K562 (cell line): ENCODE measurements at regions of chr12 and their contacts with region 1.

Region 1: DNA sequence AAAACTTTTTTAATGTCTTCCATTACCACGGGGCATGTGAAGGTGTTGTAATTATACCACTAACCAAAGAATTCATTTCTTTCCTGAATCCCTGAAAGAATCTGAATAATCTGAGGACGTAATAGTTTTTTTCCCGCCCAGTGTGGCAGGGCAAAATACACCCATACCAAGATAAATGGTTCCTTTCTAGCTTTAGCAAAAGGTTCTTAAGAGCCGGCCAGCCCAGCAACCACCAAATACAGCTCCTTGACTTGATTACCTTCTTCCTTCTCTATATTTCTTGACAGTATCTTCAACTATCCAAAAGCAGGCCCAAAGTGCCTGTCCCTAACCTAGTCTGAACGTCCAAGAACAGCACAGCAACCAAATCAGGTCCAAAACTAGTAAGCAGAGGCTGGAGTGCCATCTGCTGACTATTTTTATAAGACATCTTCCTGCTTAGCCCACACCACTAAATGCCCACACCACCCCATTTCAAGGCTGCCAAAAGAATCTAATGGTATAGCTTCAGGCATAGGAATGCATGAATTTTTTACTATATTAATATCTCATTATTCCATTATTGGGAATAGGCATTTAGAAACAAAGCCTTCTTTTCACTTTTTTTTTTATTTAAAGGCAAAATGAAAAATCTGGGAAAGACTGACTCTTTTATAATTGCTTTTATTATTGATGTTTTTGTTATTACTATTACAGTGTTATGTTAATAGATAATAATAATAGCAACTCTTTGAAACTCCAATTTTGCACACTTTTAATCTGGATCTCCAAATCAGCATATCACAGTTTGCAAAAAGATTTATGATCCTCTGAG is 524.4 kb downstream of the MED13L start:
- DNase-seq: peak; percentile 26 to 48 (median 32)
- ATAC-seq: peak; percentile 81
- H3K4me3 ChIP-seq: no peak overlapping the region
- H3K27ac ChIP-seq: no peak overlapping the region
- H3K4me1 ChIP-seq: no peaks in the 10 kb centered on the region
- H3K27me3 ChIP-seq: peaks cover 0 to 2% of the 10 kb centered on the region in 2 experiments; a peak in 3 of 5 replicates
- CTCF ChIP-seq: peak; percentile 45 to 65 (median 57)
- EP300 ChIP-seq: no peak
- POLR2A ChIP-seq: no peak
- RAD21 ChIP-seq: peak; percentile 72 to 79

Region 2: DNA sequence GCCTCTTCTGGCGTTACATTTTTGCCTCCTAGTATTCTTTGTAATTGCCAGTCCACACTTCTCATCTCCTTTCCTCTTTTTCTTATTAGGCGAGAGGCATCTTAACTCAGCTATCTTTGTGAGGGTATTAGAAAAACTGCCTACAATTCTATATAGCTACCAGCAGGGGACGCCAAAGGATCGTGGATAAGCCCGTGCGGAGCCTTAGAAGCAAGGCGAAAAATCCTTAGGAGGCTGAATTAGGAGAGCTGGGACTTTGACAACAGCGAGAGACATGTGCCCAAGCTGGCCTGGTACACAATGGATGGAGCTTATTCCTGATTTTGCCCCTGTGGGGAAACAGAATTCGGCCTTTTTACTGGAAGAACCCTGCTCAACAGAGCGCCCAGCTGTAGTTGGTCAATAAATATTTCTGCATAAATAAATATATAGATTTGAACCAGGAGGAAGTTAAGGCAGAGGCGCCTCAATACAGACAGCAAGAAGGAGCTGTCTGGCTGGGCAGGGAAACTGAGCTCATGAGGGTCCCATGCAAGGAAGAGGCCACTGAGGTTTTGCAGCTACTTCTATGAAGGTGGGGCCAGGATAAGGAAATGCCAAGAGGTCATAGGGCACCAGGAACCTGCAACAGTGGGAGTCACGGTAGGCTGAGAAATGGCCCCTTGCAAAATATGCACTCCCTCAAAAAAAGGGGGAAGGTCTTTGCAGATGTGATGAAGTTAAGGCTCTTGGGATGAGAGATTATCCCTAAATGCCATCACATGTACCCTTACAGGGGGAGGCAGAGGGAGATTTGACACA is 1772.4 kb before region 1 on chr12:
- CTCF ChIA-PET with region 1: interaction called, 4 read pairs
- POLR2A ChIA-PET with region 1: no interaction called
- in situ Hi-C with region 1: loop called (anchors 25 kb)
- intact Hi-C with region 1: loop called (anchors 10 kb)
- DNase-seq: peak; percentile 62 to 79 (median 66)
- ATAC-seq: peak; percentile 89
- H3K4me3 ChIP-seq: no peak overlapping the region
- H3K27ac ChIP-seq: no peak overlapping the region
- H3K4me1 ChIP-seq: no peaks in the 10 kb centered on the region
- H3K27me3 ChIP-seq: no peaks in the 10 kb centered on the region; a peak in 1 of 5 replicates
- CTCF ChIP-seq: peak; percentile 87 to 98 (median 94)
- EP300 ChIP-seq: no peak
- POLR2A ChIP-seq: no peak
- RAD21 ChIP-seq: peak; percentile 85 to 94

Region 3: DNA sequence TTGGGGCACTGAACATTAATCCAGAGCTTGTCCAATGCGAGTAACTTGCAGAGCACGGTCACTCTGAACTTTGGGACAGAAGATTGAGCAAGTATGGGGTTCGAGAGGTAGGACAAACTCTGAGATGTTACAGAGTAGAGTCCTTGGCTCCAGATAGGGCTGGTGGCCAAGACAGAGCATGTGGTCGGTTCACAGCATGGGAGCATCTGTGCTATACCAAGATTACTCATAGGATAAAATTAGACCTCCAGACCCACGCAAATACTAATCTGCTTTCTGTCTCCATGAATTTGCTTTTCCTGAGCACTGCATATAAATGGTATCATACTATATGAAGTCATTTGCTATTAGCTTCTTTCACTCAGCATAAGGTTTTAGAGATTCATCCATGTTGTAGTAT is 1253.8 kb before region 1 on chr12:
- CTCF ChIA-PET with region 1: no interaction called
- POLR2A ChIA-PET with region 1: no interaction called
- in situ Hi-C with region 1: no loop called
- intact Hi-C with region 1: no loop called
- DNase-seq: no peak
- ATAC-seq: no peak
- H3K4me3 ChIP-seq: no peak overlapping the region
- H3K27ac ChIP-seq: no peak overlapping the region
- H3K4me1 ChIP-seq: no peaks in the 10 kb centered on the region
- H3K27me3 ChIP-seq: no peaks in the 10 kb centered on the region
- CTCF ChIP-seq: no peak
- EP300 ChIP-seq: no peak
- POLR2A ChIP-seq: no peak
- RAD21 ChIP-seq: no peak

Region 4: DNA sequence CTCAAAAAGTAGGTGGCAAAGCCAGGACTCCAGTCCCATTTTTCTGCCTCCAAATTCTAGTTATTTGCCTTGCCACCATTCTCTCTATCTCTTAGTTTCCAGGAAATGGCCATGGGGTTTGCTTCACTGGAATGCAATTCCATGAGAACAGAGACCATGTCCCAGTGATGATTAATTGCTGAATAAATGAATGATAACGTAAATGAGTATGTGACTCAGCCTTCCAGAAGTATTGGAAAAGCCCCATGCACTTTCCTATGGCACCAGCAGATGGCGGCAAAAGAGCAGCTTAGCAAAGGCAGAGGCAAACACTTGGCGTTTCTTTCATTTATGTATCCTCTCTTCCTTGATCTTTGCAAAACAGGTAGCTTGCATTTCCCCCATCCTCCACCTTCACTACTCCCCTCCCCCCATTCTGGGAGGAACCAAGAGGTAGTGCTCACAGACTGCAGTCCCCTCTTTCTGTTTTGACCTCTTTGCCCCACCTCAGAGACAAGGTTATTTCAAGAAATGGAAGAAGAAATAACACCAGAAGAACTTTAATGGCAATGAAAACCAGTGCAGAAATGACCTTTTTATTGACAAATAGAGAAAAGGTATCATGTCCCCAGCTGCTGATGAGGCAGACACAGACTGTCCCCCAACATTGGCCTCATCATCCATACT is 1090.5 kb before region 1 on chr12:
- CTCF ChIA-PET with region 1: interaction called, 9 read pairs
- POLR2A ChIA-PET with region 1: no interaction called
- in situ Hi-C with region 1: loop called (anchors 5 kb)
- intact Hi-C with region 1: loop called (anchors 2 kb)
- DNase-seq: peak; percentile 57 to 69 (median 68)
- ATAC-seq: peak; percentile 75
- H3K4me3 ChIP-seq: no peak overlapping the region
- H3K27ac ChIP-seq: no peak overlapping the region
- H3K4me1 ChIP-seq: peaks cover 0 to 8% of the 10 kb centered on the region in 2 experiments; a peak in 2 of 5 replicates
- H3K27me3 ChIP-seq: peaks cover 15 to 19% of the 10 kb centered on the region in 2 experiments; a peak in 3 of 5 replicates
- CTCF ChIP-seq: peak; percentile 79 to 88 (median 85)
- EP300 ChIP-seq: no peak
- POLR2A ChIP-seq: no peak
- RAD21 ChIP-seq: peak; percentile 81 to 89

Region 5: GRCh38 chr12:116183741-116184141 is 430.6 kb after region 1 on chr12:
- CTCF ChIA-PET with region 1: no interaction called
- POLR2A ChIA-PET with region 1: no interaction called
- in situ Hi-C with region 1: no loop called
- intact Hi-C with region 1: no loop called
- DNase-seq: no peak
- ATAC-seq: no peak
- H3K4me3 ChIP-seq: no peak overlapping the region
- H3K27ac ChIP-seq: no peak overlapping the region
- H3K4me1 ChIP-seq: peaks cover 7 to 31% of the 10 kb centered on the region in 2 experiments; a peak in 3 of 5 replicates
- H3K27me3 ChIP-seq: no peaks in the 10 kb centered on the region
- CTCF ChIP-seq: no peak
- EP300 ChIP-seq: no peak
- POLR2A ChIP-seq: no peak
- RAD21 ChIP-seq: no peak